ENCODE measurements at regions of chr10 and their contacts with region 1.

Region 1: GRCh38 chr10:45235798-45236231 is 79.6 kb downstream of the OR13A1 start:
- DNase-seq: peak; percentile 71
- H3K4me3 ChIP-seq: no peak overlapping the region
- H3K27ac ChIP-seq: no peak overlapping the region
- H3K4me1 ChIP-seq: peaks cover 11% of the 10 kb centered on the region
- H3K27me3 ChIP-seq: no peaks in the 10 kb centered on the region
- CTCF ChIP-seq: no peak

Region 2: GRCh38 chr10:44932517-44933450 is 303.0 kb before region 1 on chr10:
- CTCF ChIA-PET with region 1: interaction called, 3 read pairs
- dilution Hi-C with region 1: no loop called
- in situ Hi-C with region 1: no loop called
- intact Hi-C with region 1: loop called (anchors 1 kb)
- DNase-seq: peak; percentile 67
- H3K4me3 ChIP-seq: no peak overlapping the region
- H3K27ac ChIP-seq: no peak overlapping the region
- H3K4me1 ChIP-seq: peaks cover 14% of the 10 kb centered on the region
- H3K27me3 ChIP-seq: no peaks in the 10 kb centered on the region
- CTCF ChIP-seq: peak; percentile 95 to 99

Region 3: GRCh38 chr10:45008524-45009161 is 227.2 kb before region 1 on chr10:
- CTCF ChIA-PET with region 1: no interaction called
- dilution Hi-C with region 1: no loop called
- in situ Hi-C with region 1: loop called in 1 of 2 experiments (anchors 5 kb)
- intact Hi-C with region 1: loop called (anchors 2 kb)
- DNase-seq: peak; percentile 85
- H3K4me3 ChIP-seq: no peak overlapping the region
- H3K27ac ChIP-seq: no peak overlapping the region
- H3K4me1 ChIP-seq: no peaks in the 10 kb centered on the region
- H3K27me3 ChIP-seq: no peaks in the 10 kb centered on the region
- CTCF ChIP-seq: peak; percentile 69 to 77

Region 4: GRCh38 chr10:45282061-45282460 is 46.2 kb after region 1 on chr10:
- CTCF ChIA-PET with region 1: no interaction called
- dilution Hi-C with region 1: no loop called
- in situ Hi-C with region 1: no loop called
- intact Hi-C with region 1: loop called (anchors 1 kb)
- DNase-seq: no peak
- H3K4me3 ChIP-seq: no peak overlapping the region
- H3K27ac ChIP-seq: no peak overlapping the region
- H3K4me1 ChIP-seq: no peaks in the 10 kb centered on the region
- H3K27me3 ChIP-seq: peaks cover 2% of the 10 kb centered on the region
- CTCF ChIP-seq: peak in 1 of 2 donors; percentile 8

Region 5: DNA sequence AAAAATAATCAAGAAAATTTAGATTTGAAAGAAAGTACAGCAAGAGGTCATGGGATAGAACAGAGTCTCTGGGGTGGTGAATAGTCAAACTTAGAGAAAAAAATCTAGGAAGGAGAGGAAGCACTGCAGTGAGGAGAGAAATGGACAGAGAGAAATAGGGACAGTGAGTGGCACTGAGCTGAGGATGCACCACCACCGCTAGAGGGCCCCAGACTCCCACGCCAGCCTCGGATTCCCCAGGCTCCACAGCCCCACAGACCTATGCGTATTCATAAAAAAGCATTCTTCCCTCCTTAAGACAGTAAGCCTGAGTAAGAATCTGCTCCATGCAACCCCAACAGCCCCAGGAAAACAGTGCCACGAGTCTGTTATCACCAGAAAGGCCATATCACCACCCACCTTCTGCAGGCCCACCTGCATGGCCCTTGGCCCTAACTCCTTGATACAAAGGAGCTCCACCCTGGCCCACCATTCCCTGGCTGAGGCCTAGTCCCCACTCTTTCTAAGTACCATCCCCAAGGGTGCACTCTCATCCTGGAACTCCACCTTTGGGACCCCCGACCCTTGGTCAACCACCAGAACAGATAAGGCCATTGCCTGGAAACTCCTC is 229.2 kb after region 1 on chr10:
- CTCF ChIA-PET with region 1: no interaction called
- dilution Hi-C with region 1: no loop called
- in situ Hi-C with region 1: no loop called
- intact Hi-C with region 1: loop called (anchors 5 kb)
- DNase-seq: peak; percentile 47
- H3K4me3 ChIP-seq: no peak overlapping the region
- H3K27ac ChIP-seq: no peak overlapping the region
- H3K4me1 ChIP-seq: no peaks in the 10 kb centered on the region
- H3K27me3 ChIP-seq: no peaks in the 10 kb centered on the region
- CTCF ChIP-seq: peak; percentile 95 to 97

Region 6: DNA sequence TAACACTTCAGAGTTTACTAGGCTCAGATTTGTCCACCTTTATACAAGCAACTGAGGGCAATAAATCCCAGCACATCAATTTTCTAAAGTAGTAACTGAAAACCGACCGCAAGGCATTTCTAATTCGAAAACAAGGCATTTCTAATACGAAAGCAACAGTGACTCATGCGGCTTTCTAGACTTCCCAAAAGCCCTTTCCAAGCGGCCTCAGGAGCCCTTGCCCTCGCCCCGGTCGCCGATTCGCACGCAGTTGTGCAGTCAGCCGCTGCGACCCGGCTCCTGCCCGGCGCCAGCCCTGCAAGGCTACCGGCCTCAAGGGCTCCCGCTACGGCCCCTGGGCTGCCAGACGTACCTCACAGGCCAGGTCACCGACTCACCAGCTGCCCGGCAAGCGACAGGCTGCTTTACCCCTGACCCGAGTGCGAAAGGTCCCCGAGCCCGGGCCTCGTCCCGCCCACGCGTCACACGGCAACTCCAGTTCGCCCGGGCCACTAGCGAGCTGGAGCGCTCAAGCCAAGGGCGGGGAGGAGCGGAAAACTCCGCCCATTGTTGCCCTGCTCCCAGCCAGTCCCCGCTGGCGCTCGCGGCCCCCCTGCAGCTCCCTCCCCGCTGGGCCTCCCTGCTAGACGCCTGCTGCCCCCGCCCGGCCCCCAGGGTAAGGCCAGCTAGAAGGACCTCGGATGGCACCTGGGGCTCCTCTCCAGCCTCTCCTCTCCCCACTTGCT is 787.3 kb after region 1 on chr10:
- CTCF ChIA-PET with region 1: no interaction called
- dilution Hi-C with region 1: no loop called
- in situ Hi-C with region 1: no loop called
- intact Hi-C with region 1: loop called (anchors 10 kb)
- DNase-seq: peak; percentile 87
- H3K4me3 ChIP-seq: peak overlapping the region; percentile 69 to 78 (median 69)
- H3K27ac ChIP-seq: peak overlapping the region; percentile 72
- H3K4me1 ChIP-seq: peaks cover 34% of the 10 kb centered on the region
- H3K27me3 ChIP-seq: no peaks in the 10 kb centered on the region
- CTCF ChIP-seq: no peak

Region 7: DNA sequence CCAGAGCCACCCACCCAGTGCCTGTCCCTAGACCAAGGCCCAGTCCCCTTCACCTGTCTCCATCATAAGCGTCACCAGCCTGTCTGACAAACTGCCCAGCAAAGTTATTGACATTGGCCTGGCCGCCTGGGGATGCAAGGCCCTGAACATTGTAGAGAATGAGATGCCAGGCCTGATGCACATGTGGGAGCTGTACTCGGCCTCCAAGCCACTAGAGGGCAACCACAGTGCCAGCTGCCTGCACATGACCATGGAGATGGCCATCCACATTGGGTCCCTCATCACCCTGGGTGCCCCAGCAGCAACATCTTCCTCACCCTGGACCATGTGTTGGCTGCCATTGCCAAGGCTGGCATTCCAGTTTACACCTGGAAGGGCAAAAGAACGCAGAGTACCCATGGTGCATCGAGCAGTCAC is 987.3 kb after region 1 on chr10:
- CTCF ChIA-PET with region 1: no interaction called
- dilution Hi-C with region 1: no loop called
- in situ Hi-C with region 1: no loop called
- intact Hi-C with region 1: loop called (anchors 5 kb)
- DNase-seq: no peak
- H3K4me3 ChIP-seq: no peak overlapping the region
- H3K27ac ChIP-seq: no peak overlapping the region
- H3K4me1 ChIP-seq: no peaks in the 10 kb centered on the region
- H3K27me3 ChIP-seq: no peaks in the 10 kb centered on the region
- CTCF ChIP-seq: peak in 1 of 2 donors; percentile 14